Heart left ventricle (tissue), 16 donors: ENCODE measurements at regions of chr2 and their contacts with region 1.

Region 1: GRCh38 chr2:950080-950966 is at the start of gene SNTG2:
- DNase-seq: peak in 3 of 5 donors; percentile 37 to 40 (median 40)
- ATAC-seq: peak in 3 of 4 donors; percentile 80 to 89 (median 87)
- H3K4me3 ChIP-seq: peak within 1 kb of the TSS; percentile 34 to 71 (median 56)
- H3K27ac ChIP-seq: no peak within 1 kb of the TSS
- H3K4me1 ChIP-seq: peaks cover 0 to 21% (median 9%) of the 10 kb centered on the region in 12 donors
- H3K27me3 ChIP-seq: peaks cover 20 to 88% (median 53%) of the 10 kb centered on the region in 9 donors
- CTCF ChIP-seq: no peak
- POLR2A ChIP-seq: peak in 1 of 2 donors; percentile 17
- total RNA-seq, gene SNTG2: 0.58 to 3.2 (median 1.1) TPM

Region 2: GRCh38 chr2:1140389-1141003 is 190.2 kb after region 1 on chr2:
- intact Hi-C with region 1: loop called in 1 of 10 experiments (anchors 5 kb)
- DNase-seq: no peak
- ATAC-seq: peak in 2 of 4 donors; percentile 47 to 49
- H3K4me3 ChIP-seq: no peak overlapping the region
- H3K27ac ChIP-seq: peak overlapping the region in 9 of 12 donors; percentile 1 to 71 (median 34)
- H3K4me1 ChIP-seq: peaks cover 0 to 5% (median 0%) of the 10 kb centered on the region in 12 donors
- H3K27me3 ChIP-seq: peaks cover 0 to 4% (median 0%) of the 10 kb centered on the region in 9 donors
- CTCF ChIP-seq: peak; percentile 47 to 84 (median 74)
- POLR2A ChIP-seq: no peak

Region 3: DNA sequence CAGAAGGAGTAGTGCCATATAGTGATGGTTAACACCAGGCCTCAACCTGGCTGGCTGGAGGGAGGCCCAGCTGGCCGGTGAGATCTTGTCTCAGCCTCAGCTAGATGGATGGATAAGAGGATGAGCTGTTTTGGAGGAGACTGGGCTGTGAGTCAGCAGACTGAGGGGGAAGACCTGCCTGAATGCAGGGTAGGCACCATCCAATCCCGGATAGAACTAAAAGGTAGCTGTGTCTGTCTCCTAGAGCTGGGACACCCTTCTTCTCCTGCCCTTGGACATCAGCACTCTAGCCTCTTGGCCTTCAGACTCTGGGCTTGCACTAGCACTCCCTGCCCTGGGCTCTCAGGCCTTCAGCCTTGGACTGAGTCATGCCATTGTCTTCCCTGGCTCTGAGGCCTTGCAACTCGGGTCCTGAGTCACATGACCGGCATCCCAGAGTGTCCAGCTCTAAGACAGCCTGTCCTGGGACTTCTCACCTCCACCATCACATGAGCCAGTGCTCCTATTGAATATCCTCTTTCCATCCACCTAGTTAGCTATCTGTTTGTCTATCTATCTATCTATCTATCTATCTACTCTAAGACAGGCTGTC is 594.3 kb after region 1 on chr2:
- intact Hi-C with region 1: loop called (anchors 2 to 5 kb)
- DNase-seq: no peak
- ATAC-seq: peak in 3 of 4 donors; percentile 41 to 51 (median 44)
- H3K4me3 ChIP-seq: no peak overlapping the region
- H3K27ac ChIP-seq: peak overlapping the region in 2 of 12 donors; percentile 19 to 20
- H3K4me1 ChIP-seq: peaks cover 0 to 7% (median 0%) of the 10 kb centered on the region in 12 donors
- H3K27me3 ChIP-seq: peaks cover 0 to 7% (median 0%) of the 10 kb centered on the region in 9 donors
- CTCF ChIP-seq: no peak
- POLR2A ChIP-seq: no peak

Region 4: DNA sequence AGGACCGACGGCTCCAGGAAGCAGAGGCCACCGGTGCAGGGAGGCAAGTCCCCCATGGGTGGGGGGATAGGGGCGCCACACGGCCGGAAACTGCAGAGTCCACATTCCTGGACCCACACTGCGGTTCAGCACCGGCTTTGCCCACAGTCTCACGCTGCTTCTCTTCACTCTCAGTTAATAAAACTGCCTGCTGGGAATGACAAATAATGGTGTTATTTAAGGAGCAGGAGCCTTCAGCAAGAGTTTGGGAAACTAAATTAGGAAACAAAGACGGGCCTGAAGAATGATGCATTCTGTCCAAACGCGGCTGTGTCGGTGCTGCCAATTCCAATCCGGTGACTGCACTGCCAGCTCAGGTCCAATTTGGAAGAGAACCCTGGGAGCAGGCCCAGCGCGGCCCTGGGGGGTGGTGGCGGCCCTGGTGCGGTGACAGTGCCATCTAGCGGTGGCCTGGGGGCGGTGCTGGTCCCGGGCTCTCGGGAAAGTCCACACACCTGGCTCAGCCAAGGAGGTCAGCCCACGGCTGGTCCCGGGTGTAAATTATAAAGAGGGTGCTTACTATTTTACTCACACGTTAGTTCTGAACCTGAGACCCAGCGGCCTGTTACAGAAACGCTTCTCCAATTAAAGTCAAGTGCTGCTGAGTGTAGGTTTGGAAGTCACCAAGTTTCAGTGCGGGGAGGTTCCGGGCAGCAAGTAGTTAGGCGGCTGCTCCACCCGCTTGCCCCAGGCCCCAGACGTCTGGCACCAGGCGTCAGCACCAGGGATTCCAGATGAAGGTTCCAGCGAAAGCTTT is 867.1 kb after region 1 on chr2:
- intact Hi-C with region 1: loop called in 3 of 10 experiments (anchors 5 to 10 kb)
- DNase-seq: peak; percentile 86 to 93 (median 89)
- ATAC-seq: peak; percentile 92 to 96 (median 94)
- H3K4me3 ChIP-seq: peak overlapping the region in 2 of 12 donors; percentile 3 to 24
- H3K27ac ChIP-seq: peak overlapping the region; percentile 31 to 95 (median 79)
- H3K4me1 ChIP-seq: peaks cover 0 to 25% (median 12%) of the 10 kb centered on the region in 12 donors
- H3K27me3 ChIP-seq: no peaks in the 10 kb centered on the region
- CTCF ChIP-seq: peak; percentile 90 to 99 (median 98)
- POLR2A ChIP-seq: no peak

Region 5: DNA sequence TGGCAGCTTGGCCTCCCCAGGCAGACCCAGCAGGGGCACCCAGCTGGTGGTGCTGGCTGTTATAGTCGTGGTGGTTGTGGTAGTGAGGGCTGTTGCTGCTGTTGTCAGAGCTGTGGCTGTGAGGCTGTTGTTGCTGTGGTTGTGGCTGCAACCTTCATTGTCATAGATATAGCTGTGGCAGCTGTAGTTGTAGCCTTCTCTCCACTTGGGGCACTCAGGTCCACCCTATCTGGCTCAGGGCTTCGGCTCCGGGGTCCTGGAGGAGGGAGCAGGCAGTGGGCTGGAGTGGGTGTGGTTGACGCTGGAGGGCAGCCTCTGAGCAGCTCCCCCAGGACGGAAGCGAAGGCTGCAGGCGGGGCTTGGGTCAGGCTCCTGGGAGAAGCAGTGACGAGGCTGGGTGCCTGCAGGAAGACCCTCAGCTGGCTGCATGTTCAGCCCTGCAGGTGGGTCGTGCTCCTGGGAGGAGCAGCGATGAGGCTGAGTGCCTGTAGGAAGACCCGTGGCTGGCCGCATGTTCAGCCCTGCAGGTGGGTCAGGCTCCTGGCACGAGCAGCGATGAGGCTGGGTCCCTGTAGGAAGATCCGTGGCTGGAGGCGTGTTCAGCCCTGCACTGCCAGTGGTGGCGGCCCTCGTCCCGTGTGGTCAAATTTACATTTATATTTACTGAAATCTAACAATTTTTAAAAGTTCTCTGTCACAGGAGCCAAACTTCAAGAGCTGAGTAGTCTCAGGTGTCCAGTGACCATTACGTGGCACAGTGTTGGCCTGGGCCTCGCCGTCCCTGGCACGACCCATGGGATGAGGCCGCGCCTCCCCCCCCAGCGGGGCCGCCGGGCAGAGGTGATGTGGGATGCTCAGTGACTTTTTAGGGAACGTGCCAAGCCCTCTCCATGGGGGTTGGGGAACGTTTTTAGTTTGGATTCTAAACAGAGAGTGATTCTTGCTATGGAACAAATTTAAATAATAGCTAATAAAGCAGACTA is 873.2 kb after region 1 on chr2:
- intact Hi-C with region 1: loop called in 3 of 10 experiments (anchors 5 to 10 kb)
- DNase-seq: no peak
- ATAC-seq: no peak
- H3K4me3 ChIP-seq: no peak overlapping the region
- H3K27ac ChIP-seq: peak overlapping the region in 2 of 12 donors; percentile 42 to 57
- H3K4me1 ChIP-seq: peaks cover 0 to 4% (median 0%) of the 10 kb centered on the region in 12 donors
- H3K27me3 ChIP-seq: peaks cover 0 to 22% (median 0%) of the 10 kb centered on the region in 9 donors
- CTCF ChIP-seq: no peak
- POLR2A ChIP-seq: no peak